K562 (cell line): ENCODE measurements at regions of chr4 and their contacts with region 1.

Region 1: DNA sequence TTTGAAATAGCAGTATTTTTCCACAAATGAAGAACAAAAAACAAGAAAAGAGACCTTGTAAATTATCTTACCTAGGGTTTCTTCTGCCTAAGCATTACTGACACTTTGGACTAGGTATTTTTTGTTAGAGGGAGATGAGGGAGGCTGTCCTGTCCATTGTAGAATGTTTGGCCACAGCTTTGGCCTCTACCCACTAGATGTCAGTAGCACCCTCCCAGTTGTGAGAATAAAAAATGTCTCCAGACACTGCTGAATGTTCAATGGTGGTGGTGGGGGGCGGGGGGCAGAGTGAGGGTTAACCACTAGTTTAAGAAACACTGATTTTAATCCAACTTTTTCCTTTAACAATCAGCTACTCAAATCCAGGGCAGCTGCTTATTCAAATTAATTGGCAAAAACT is 25.8 kb downstream of the OTUD4 start:
- DNase-seq: peak in 1 of 4 experiments; percentile 42
- ATAC-seq: peak; percentile 92
- H3K4me3 ChIP-seq: no peak overlapping the region
- H3K27ac ChIP-seq: no peak overlapping the region
- H3K4me1 ChIP-seq: no peaks in the 10 kb centered on the region
- H3K27me3 ChIP-seq: no peaks in the 10 kb centered on the region
- CTCF ChIP-seq: peak; percentile 37 to 58 (median 39); a peak in 4 of 6 replicates
- EP300 ChIP-seq: no peak
- POLR2A ChIP-seq: no peak
- RAD21 ChIP-seq: peak in 1 of 2 experiments; percentile 46; a peak in 3 of 4 replicates

Region 2: DNA sequence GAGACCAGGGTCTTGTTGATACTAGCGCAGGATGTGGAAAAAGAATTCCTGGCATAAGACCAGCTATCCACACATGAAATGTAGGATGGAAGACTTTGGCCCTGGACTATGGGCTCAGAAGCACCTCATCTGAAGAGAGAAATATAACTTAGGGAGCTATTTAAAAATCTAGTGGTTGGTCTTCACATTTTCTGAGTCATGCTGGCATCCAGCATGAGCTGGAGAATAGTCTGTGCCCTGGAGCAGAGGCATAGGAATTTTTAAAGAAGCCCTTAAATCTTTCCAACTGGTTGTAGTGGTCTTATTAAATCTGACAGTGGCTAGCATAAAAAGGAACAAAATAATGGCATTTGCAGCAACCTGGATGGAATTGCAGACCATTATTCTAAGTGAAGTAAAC is 1554.7 kb before region 1 on chr4:
- CTCF ChIA-PET with region 1: no interaction called
- POLR2A ChIA-PET with region 1: no interaction called
- in situ Hi-C with region 1: no loop called
- intact Hi-C with region 1: no loop called
- DNase-seq: no peak
- ATAC-seq: no peak
- H3K4me3 ChIP-seq: no peak overlapping the region
- H3K27ac ChIP-seq: no peak overlapping the region
- H3K4me1 ChIP-seq: no peaks in the 10 kb centered on the region
- H3K27me3 ChIP-seq: no peaks in the 10 kb centered on the region
- CTCF ChIP-seq: no peak
- EP300 ChIP-seq: no peak
- POLR2A ChIP-seq: no peak
- RAD21 ChIP-seq: no peak

Region 3: DNA sequence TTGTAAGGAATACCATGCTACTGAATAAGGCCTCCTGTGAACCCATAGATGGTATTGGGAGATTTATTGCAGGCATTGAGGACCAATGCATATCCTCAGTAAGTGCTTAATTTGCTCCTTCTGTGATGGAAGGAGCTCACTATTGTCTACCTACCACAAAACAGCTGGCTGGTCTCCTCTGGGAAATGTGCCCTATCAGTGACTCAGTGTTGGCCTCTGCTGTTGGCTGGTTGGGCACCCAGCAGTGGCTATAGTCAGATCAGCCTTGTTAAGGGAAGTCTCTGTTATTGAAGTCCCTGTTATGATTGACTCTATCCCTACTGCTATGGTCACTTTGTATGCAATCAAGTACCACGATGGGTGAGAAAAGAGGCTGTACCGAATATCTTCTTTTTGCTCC is 53.4 kb after region 1 on chr4:
- CTCF ChIA-PET with region 1: no interaction called
- POLR2A ChIA-PET with region 1: no interaction called
- in situ Hi-C with region 1: no loop called
- intact Hi-C with region 1: loop called (anchors 5 kb)
- DNase-seq: no peak
- ATAC-seq: no peak
- H3K4me3 ChIP-seq: no peak overlapping the region
- H3K27ac ChIP-seq: no peak overlapping the region
- H3K4me1 ChIP-seq: no peaks in the 10 kb centered on the region
- H3K27me3 ChIP-seq: peaks cover 0 to 5% of the 10 kb centered on the region in 2 experiments; a peak in 1 of 5 replicates
- CTCF ChIP-seq: no peak
- EP300 ChIP-seq: no peak
- POLR2A ChIP-seq: no peak
- RAD21 ChIP-seq: no peak

Region 4: DNA sequence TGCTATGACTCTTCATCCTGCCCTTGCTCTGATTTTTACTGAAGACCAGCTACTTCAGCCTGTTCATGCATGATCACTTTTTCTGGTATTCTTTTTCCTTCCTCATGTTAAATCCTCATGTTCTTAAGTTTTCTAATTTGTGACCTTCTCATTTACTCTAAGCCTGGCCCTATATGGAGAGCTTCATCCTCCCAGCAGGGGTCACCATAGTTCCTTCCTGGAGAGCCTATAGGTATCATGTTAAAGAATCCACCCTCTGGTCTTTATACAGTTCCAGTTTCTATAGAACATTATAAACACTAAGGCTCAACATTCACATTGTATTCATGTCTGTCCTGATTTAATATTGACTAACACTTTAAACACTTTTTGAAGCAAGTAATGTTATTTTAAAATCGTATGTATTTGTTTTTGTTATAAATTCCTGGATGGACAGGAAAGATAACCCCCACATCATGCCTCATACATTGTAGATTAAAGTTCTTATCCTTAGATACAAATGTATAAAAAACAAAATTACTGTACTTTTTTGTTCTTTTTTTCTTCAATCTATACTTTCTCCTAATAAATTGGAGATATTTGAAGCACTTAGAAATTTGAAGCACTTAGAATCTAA is 79.6 kb after region 1 on chr4:
- CTCF ChIA-PET with region 1: no interaction called
- POLR2A ChIA-PET with region 1: no interaction called
- in situ Hi-C with region 1: no loop called
- intact Hi-C with region 1: loop called (anchors 2 kb)
- DNase-seq: peak; percentile 42 to 77 (median 55)
- ATAC-seq: peak; percentile 100
- H3K4me3 ChIP-seq: no peak overlapping the region
- H3K27ac ChIP-seq: no peak overlapping the region
- H3K4me1 ChIP-seq: no peaks in the 10 kb centered on the region; a peak in 1 of 5 replicates
- H3K27me3 ChIP-seq: no peaks in the 10 kb centered on the region; a peak in 2 of 5 replicates
- CTCF ChIP-seq: peak; percentile 73 to 83 (median 74)
- EP300 ChIP-seq: no peak
- POLR2A ChIP-seq: no peak
- RAD21 ChIP-seq: peak; percentile 74 to 81

Region 5: DNA sequence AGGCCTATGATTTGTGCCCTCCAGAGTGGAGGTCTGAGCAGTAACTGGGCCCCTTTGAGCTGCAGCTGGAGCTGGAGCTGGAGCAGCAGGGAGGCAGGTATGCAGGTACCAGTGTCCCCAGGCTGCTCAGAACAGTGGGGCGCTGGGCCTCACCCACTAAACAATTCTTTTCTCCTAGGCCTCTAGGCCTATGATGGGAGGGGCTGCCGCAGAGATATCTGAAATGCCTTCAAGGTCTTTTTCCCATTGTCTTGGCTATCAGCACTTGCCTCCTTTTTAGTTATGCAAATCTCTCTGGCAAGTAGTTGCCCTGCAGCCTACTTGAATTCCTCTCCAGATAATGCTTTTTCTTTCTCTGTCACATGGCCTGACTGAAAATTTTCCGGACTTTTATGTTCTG is 105.5 kb after region 1 on chr4:
- CTCF ChIA-PET with region 1: no interaction called
- POLR2A ChIA-PET with region 1: no interaction called
- in situ Hi-C with region 1: no loop called
- intact Hi-C with region 1: no loop called
- DNase-seq: peak in 1 of 4 experiments; percentile 8
- ATAC-seq: peak; percentile 39
- H3K4me3 ChIP-seq: no peak overlapping the region
- H3K27ac ChIP-seq: no peak overlapping the region
- H3K4me1 ChIP-seq: peaks cover 0 to 3% of the 10 kb centered on the region in 2 experiments; a peak in 1 of 5 replicates
- H3K27me3 ChIP-seq: peaks cover 0 to 4% of the 10 kb centered on the region in 2 experiments; a peak in 1 of 5 replicates
- CTCF ChIP-seq: no peak
- EP300 ChIP-seq: no peak
- POLR2A ChIP-seq: no peak
- RAD21 ChIP-seq: no peak

Region 6: GRCh38 chr4:145557720-145558119 is 403.1 kb after region 1 on chr4:
- CTCF ChIA-PET with region 1: interaction called, 8 read pairs
- POLR2A ChIA-PET with region 1: no interaction called
- in situ Hi-C with region 1: no loop called
- intact Hi-C with region 1: loop called (anchors 5 kb)
- DNase-seq: peak; percentile 52 to 71 (median 67)
- ATAC-seq: peak; percentile 99
- H3K4me3 ChIP-seq: no peak overlapping the region
- H3K27ac ChIP-seq: no peak overlapping the region
- H3K4me1 ChIP-seq: no peaks in the 10 kb centered on the region
- H3K27me3 ChIP-seq: peaks cover 0 to 4% of the 10 kb centered on the region in 2 experiments; a peak in 1 of 5 replicates
- CTCF ChIP-seq: peak; percentile 86 to 99 (median 99)
- EP300 ChIP-seq: no peak
- POLR2A ChIP-seq: no peak
- RAD21 ChIP-seq: peak; percentile 57 to 65

Region 7: DNA sequence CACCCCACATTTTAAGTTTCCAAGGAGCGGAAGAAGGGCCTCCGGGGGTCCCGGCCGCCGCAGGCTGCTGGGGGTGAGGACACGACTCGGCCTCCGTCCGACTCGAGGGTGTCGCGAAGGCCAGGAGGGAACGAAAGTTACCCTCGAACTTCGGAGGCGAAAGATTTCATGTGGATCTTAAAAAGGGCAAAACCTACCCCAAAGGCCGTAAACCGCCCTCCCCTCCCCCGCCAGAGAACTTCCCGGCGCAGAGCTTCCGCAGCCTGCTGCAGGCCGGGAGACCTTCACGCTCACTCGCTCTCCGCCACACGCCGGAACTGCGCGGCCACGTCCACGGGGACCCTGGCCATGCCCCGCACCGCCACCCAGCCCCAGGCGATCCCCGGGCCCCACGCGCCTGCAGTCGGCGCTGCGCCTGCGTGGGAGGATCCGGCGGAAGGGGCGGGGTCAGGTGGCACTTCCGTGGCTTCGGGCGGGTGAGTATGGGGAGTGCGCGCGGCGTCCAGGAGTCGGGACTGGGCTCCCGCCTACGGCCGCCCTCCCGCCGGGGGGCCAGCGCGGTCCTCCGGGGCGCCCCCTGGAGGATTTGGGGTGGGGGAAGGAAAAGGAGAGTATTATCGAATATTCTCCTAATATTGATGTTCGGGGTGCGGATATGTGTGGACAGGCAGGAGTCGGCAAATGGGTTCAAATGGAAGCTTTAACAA is 464.5 kb after region 1 on chr4 and contains the start of gene MMAA:
- CTCF ChIA-PET with region 1: no interaction called
- POLR2A ChIA-PET with region 1: no interaction called
- in situ Hi-C with region 1: no loop called
- intact Hi-C with region 1: loop called (anchors 10 kb)
- DNase-seq: peak; percentile 94 to 96 (median 96)
- ATAC-seq: peak; percentile 99
- H3K4me3 ChIP-seq: peak within 1 kb of the TSS; percentile 70
- H3K27ac ChIP-seq: peak within 1 kb of the TSS; percentile 90
- H3K4me1 ChIP-seq: peaks cover 0 to 5% of the 10 kb centered on the region in 2 experiments; a peak in 2 of 5 replicates
- H3K27me3 ChIP-seq: no peaks in the 10 kb centered on the region
- CTCF ChIP-seq: peak; percentile 68 to 82 (median 74)
- EP300 ChIP-seq: no peak
- POLR2A ChIP-seq: peak; percentile 93
- RAD21 ChIP-seq: 0 out of 4 replicates have a peak, but pooled peaks of 1 of the 2 experiments have one; percentile 31
- polyA plus RNA-seq, gene MMAA: 0.96 to 1.5 TPM